Colonic mucosa (tissue), 4 donors: ENCODE measurements at regions of chr5 and their contacts with region 1.

Region 1: DNA sequence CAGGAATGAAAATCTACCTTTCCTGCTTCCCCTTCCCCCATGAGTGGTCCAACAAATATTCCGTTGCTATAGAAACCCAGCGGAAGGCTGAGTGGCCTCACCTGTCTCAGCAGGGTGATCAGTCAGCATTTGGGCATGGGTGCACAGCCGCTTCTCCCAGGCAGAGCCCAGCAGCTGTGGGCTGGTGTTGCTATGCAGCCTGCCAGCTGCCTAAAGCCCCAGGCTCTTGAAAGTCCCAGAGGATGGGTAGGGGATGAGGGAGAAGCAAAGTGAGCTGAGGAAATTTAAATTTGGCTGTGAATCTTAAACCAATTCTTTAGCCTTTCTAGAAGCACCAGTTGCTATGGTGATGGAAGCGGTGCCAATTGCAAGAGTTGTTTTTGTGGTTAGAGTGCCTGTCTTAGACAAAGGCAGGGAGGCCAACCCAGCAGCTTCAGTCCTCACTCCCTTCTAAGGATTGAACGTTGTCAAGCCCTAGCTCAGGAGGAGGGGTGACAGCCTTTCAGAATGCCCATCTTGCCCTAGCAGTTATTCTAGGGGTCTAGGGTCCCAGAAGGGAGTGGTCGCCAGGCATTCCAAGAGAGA is 151.5 kb upstream of the PITX1 start:
- DNase-seq: peak; percentile 48
- H3K4me3 ChIP-seq: no peak overlapping the region
- H3K27ac ChIP-seq: peak overlapping the region; percentile 26
- H3K4me1 ChIP-seq: no peaks in the 10 kb centered on the region
- H3K27me3 ChIP-seq: peaks cover 11% of the 10 kb centered on the region
- CTCF ChIP-seq: no peak

Region 2: GRCh38 chr5:135034236-135034962 is 151.2 kb before region 1 on chr5:
- intact Hi-C with region 1: loop called (anchors 5 kb)
- DNase-seq: peak; percentile 72
- H3K4me3 ChIP-seq: peak overlapping the region; percentile 49
- H3K27ac ChIP-seq: peak overlapping the region; percentile 50
- H3K4me1 ChIP-seq: peaks cover 23% of the 10 kb centered on the region
- H3K27me3 ChIP-seq: peaks cover 86% of the 10 kb centered on the region
- CTCF ChIP-seq: no peak